Panc1 (cell line): ENCODE measurements at regions of chr17 and their contacts with region 1.

Region 1: DNA sequence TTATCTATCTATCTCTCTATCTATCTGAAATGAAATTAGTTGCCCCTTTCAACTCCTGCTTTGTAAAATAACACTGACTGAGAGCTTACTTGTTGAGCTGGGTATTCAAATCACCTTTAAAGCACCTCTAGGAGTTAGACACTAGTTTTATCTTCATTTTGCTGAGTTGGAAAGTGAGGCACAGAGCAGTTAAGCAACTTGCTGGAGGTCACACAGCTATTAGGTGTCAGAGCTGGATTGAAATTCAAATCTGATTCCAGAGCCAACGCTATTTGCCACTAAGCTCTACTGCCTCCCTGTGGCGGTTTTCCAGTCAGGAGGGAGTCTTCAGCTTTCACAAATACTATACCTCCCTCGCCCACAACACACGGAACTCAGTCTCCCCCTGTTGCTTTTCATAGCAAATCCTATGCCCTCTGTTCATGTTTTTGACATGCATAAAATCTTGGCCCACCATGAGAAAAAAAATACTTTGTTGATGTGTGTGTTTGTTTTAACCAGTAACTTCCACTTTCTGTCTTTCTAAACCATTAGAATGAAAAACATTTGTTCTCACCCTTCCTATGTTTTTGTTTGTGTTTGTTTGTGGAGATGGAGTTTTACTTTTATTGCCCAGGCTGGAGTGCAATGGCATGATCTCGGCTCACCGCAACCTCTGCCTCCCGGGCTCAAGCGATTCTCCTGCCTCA is 74.8 kb upstream of the SMURF2 start:
- DNase-seq: no peak
- ATAC-seq: peak; percentile 66
- H3K4me3 ChIP-seq: no peak overlapping the region
- H3K27ac ChIP-seq: no peak overlapping the region
- H3K4me1 ChIP-seq: peaks cover 8% of the 10 kb centered on the region; the same call in 1 of the 2 replicates
- H3K27me3 ChIP-seq: no peaks in the 10 kb centered on the region
- CTCF ChIP-seq: peak; percentile 82

Region 2: DNA sequence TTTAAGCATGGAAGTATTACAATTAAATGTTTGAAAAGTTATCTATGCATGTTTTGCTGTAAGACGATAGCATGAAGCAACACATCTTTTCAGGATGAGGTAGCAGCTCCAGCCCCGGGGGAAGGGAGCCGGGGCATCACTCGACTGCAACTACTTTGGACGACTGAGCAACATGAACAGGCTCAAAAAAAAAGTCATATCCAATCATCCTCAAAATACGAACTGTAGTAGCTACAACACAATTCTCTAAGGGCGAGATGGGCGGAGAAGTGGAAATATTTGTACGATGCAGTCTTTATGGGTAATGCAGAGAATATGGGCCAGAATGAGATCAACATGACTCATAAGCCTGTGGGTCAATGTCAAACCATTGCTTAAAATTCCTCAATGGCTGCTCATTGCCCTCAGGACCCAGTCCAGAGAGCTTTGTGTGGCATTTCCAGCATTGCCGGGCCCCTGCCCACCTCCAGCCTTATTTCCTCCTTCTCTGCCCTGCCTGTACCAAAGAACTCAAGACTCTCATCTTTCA is 57.2 kb before region 1 on chr17:
- CTCF ChIA-PET with region 1: no interaction called
- POLR2A ChIA-PET with region 1: interaction called, 12 read pairs
- in situ Hi-C with region 1: no loop called
- intact Hi-C with region 1: no loop called
- DNase-seq: no peak
- ATAC-seq: peak; percentile 86
- H3K4me3 ChIP-seq: peak overlapping the region in 1 of 2 experiments; percentile 8; a peak in 2 of 4 replicates
- H3K27ac ChIP-seq: peak overlapping the region; percentile 71; the same call in 1 of the 2 replicates
- H3K4me1 ChIP-seq: peaks cover 22% of the 10 kb centered on the region
- H3K27me3 ChIP-seq: no peaks in the 10 kb centered on the region
- CTCF ChIP-seq: no peak

Region 3: GRCh38 chr17:64773836-64774761 is 37.2 kb after region 1 on chr17:
- CTCF ChIA-PET with region 1: no interaction called
- POLR2A ChIA-PET with region 1: no interaction called
- in situ Hi-C with region 1: no loop called
- intact Hi-C with region 1: no loop called
- DNase-seq: no peak
- ATAC-seq: peak; percentile 90
- H3K4me3 ChIP-seq: peak overlapping the region; percentile 39 to 51
- H3K27ac ChIP-seq: peak overlapping the region; percentile 44; the same call in 1 of the 2 replicates
- H3K4me1 ChIP-seq: no peaks in the 10 kb centered on the region; the same call in none of the 2 replicates
- H3K27me3 ChIP-seq: no peaks in the 10 kb centered on the region
- CTCF ChIP-seq: peak; percentile 75

Region 4: DNA sequence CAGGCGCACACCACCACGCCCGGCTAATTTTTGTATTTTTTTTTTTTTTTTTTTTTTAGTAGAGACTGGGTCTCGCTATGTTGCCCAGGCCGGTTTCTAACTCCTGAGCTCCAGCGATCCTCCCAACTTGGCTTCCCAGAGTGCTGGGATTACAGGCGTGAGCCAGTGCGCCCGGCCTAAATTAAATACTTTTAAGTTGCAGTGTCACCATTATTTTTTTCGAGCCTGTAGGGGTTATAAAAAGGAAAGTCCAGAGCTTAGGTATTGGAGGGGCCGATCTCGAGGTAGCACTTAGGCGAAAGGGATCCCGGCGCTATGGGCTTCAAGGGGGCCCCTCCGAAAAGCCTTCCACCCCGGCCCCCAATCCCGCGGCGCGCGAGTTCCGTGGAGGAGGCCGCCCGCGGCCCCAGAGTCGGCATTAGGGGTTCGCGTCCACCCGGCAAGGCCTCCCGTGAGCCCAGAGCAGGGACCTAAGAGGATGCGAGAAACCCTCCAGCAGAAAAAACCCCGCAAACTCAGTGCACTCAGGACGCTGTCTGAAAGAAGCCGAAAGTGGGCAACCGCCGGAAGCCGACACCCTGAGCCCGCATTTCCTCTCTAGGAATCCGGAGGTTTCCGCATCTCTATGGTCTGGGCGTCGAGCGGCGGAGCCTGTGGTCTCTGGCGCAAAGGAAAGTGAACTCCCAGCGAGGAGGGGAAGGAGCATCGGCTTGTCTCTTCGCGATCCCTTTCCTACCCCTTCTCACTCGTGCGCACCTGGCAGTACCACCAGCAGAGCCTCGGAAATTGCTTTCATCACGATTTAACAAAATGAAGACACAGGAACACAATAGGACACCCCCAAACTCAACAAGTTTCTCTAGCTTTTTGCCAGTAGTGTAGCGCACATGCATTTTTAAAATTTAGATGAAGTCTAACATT is 386.1 kb after region 1 on chr17:
- CTCF ChIA-PET with region 1: no interaction called
- POLR2A ChIA-PET with region 1: no interaction called
- in situ Hi-C with region 1: no loop called
- intact Hi-C with region 1: no loop called
- DNase-seq: no peak
- ATAC-seq: peak; percentile 92
- H3K4me3 ChIP-seq: peak overlapping the region; percentile 49 to 63
- H3K27ac ChIP-seq: peak overlapping the region; percentile 91
- H3K4me1 ChIP-seq: peaks cover 4% of the 10 kb centered on the region; the same call in 1 of the 2 replicates
- H3K27me3 ChIP-seq: no peaks in the 10 kb centered on the region
- CTCF ChIP-seq: no peak